Heart right ventricle (tissue), 16 donors: ENCODE measurements at regions of chrX and their contacts with region 1.

Region 1: DNA sequence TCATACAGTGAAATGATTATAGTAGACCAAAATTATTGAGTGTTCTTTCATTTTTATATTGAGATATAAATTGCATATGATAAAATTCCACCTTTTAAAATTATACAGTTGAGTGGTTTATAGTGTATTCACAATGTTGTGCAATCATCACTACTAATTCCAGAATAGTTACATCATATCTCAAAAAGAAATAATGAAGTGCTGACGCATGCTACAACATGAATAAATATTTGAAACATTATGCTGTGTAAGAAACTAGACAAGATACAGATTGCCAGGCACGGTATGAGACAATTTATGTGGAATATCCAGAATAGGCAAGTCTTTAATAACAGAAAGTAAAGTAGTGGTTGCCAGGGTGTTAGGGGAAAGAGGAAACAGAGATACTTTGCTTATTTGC is 871.7 kb downstream of the FAM133A start:
- DNase-seq: no peak
- ATAC-seq: no peak
- H3K4me3 ChIP-seq: no peak overlapping the region
- H3K27ac ChIP-seq: no peak overlapping the region
- H3K4me1 ChIP-seq: no peaks in the 10 kb centered on the region
- H3K27me3 ChIP-seq: no peaks in the 10 kb centered on the region
- CTCF ChIP-seq: no peak

Region 2: DNA sequence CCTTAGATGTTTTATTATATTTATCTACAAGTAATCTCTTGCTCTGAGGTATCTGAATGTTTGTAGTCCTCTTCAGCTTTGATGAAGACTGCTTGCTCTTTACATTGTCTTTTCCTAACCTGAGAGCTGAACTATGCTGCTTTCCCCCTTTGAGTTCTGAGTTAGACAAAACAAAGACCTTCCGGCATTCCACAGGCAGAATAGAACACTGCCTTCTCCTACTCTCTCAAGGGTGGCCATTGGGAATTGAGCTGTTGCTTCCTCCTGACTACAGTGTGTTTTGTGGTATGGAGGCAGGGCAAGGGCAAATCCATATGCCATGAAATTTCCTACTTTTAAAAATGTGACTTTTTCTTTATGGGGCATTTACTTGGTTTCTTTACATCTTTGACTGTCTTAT is 30.7 kb before region 1 on chrX:
- intact Hi-C with region 1: loop called in 1 of 10 experiments (anchors 1 kb)
- DNase-seq: no peak
- ATAC-seq: no peak
- H3K4me3 ChIP-seq: no peak overlapping the region
- H3K27ac ChIP-seq: no peak overlapping the region
- H3K4me1 ChIP-seq: no peaks in the 10 kb centered on the region
- H3K27me3 ChIP-seq: no peaks in the 10 kb centered on the region
- CTCF ChIP-seq: no peak

Region 3: GRCh38 chrX:94612131-94612530 is 66.4 kb after region 1 on chrX:
- intact Hi-C with region 1: no loop called
- DNase-seq: no peak
- ATAC-seq: no peak
- H3K4me3 ChIP-seq: no peak overlapping the region
- H3K27ac ChIP-seq: no peak overlapping the region
- H3K4me1 ChIP-seq: no peaks in the 10 kb centered on the region
- H3K27me3 ChIP-seq: no peaks in the 10 kb centered on the region
- CTCF ChIP-seq: no peak